HEK293 (cell line): ENCODE measurements at regions of chr17 and their contacts with region 1.

Region 1: GRCh38 chr17:79747508-79748295 is 17.0 kb downstream of the ENPP7 start:
- H3K4me3 ChIP-seq: no peak overlapping the region
- H3K27ac ChIP-seq: no peak overlapping the region
- H3K4me1 ChIP-seq: peaks cover 11% of the 10 kb centered on the region
- CTCF ChIP-seq: no peak

Region 2: DNA sequence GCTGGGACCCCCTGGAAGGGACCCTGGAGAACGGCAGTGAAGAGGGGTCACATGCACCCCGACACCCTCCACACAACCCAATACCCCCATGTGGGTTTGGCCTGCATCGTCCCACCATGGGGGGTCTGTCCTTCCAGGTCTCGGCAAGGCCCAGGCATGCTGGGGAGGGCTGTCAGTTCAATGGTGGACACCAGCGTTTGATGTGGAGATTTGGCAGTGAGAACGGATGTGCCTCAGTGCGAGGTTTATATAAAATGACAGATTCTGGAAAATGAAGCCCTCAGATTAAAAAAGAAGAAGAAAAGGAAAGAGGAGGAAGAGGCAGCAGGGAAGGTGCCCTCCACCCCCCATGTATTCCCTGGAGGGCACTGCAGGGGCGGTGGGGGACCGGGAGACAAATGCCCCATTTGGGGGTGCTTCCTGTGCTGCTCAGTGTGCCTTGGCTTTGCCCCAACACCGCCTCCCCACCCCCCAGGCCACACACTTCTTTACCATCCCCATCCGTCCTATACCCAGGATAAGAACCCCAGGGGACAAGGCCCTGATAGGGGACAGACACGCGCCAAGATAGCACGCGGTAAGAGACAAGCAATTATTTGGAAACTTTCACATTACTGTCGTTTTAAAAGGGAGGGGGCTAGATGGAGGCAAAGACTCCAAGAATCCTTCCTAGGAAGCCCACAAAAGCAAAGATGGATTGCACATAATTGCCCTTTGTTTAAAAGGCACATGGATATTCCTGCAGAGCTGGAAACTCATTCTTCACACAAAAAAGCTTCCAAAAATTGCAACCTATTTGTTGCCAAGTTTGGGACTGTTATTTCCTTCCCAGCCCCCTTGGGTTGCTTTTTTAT is 157.8 kb before region 1 on chr17:
- CTCF ChIA-PET with region 1: no interaction called
- POLR2A ChIA-PET with region 1: no interaction called
- H3K4me3 ChIP-seq: no peak overlapping the region
- H3K27ac ChIP-seq: no peak overlapping the region
- H3K4me1 ChIP-seq: no peaks in the 10 kb centered on the region
- CTCF ChIP-seq: no peak

Region 3: GRCh38 chr17:79760197-79760906 is 12.7 kb after region 1 on chr17:
- CTCF ChIA-PET with region 1: interaction called, 23 read pairs
- POLR2A ChIA-PET with region 1: no interaction called
- H3K4me3 ChIP-seq: no peak overlapping the region
- H3K27ac ChIP-seq: no peak overlapping the region
- H3K4me1 ChIP-seq: no peaks in the 10 kb centered on the region
- CTCF ChIP-seq: no peak

Region 4: GRCh38 chr17:79771276-79771675 is 23.6 kb after region 1 on chr17:
- CTCF ChIA-PET with region 1: interaction called, 31 read pairs
- POLR2A ChIA-PET with region 1: no interaction called
- H3K4me3 ChIP-seq: no peak overlapping the region
- H3K27ac ChIP-seq: no peak overlapping the region
- H3K4me1 ChIP-seq: peaks cover under 1% of the 10 kb centered on the region
- CTCF ChIP-seq: no peak

Region 5: GRCh38 chr17:79777894-79778503 is 30.3 kb after region 1 on chr17 and contains the start of gene CBX2:
- CTCF ChIA-PET with region 1: interaction called, 31 read pairs
- POLR2A ChIA-PET with region 1: interaction called, 4 read pairs
- H3K4me3 ChIP-seq: peak within 1 kb of the TSS; percentile 67
- H3K27ac ChIP-seq: peak within 1 kb of the TSS; percentile 85
- H3K4me1 ChIP-seq: peaks cover 21% of the 10 kb centered on the region
- CTCF ChIP-seq: no peak

Region 6: GRCh38 chr17:79810130-79811010 is 62.7 kb after region 1 on chr17:
- CTCF ChIA-PET with region 1: interaction called, 17 read pairs
- POLR2A ChIA-PET with region 1: no interaction called
- H3K4me3 ChIP-seq: peak overlapping the region; percentile 37
- H3K27ac ChIP-seq: peak overlapping the region; percentile 76
- H3K4me1 ChIP-seq: peaks cover 17% of the 10 kb centered on the region
- CTCF ChIP-seq: no peak

Region 7: DNA sequence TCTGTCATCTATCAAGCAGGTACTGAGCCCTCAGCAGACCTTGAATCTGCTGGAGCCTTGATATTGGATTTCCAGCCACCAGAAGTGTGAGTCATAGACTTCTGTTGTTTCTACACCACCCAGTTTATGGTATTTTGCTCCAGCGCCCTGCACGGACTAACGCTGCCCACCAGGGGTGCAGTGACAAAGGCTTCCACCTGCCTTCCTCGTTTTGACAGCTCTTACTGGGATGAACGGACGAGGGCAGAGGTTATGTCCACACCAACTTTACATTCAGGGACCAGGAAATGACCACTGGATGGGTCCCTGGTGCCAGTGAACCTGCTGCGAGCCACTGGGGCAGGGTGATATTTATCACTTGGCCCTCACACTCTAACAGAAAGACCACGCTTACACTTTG is 158.1 kb after region 1 on chr17:
- CTCF ChIA-PET with region 1: no interaction called
- POLR2A ChIA-PET with region 1: no interaction called
- H3K4me3 ChIP-seq: no peak overlapping the region
- H3K27ac ChIP-seq: no peak overlapping the region
- H3K4me1 ChIP-seq: no peaks in the 10 kb centered on the region; the same call in 1 of the 2 replicates
- CTCF ChIP-seq: no peak

Region 8: GRCh38 chr17:79923974-79924638 is 176.4 kb after region 1 on chr17:
- CTCF ChIA-PET with region 1: interaction called, 14 read pairs
- POLR2A ChIA-PET with region 1: no interaction called
- H3K4me3 ChIP-seq: no peak overlapping the region
- H3K27ac ChIP-seq: no peak overlapping the region
- H3K4me1 ChIP-seq: peaks cover 2% of the 10 kb centered on the region; the same call in 1 of the 2 replicates
- CTCF ChIP-seq: peak; percentile 62

Region 9: GRCh38 chr17:79991140-79991923 is 243.6 kb after region 1 on chr17:
- CTCF ChIA-PET with region 1: interaction called, 28 read pairs
- POLR2A ChIA-PET with region 1: interaction called, 3 read pairs
- H3K4me3 ChIP-seq: no peak overlapping the region
- H3K27ac ChIP-seq: peak overlapping the region; percentile 85; the same call in 1 of the 2 replicates
- H3K4me1 ChIP-seq: peaks cover 36% of the 10 kb centered on the region
- CTCF ChIP-seq: no peak